T-cell (primary cell): ENCODE measurements at regions of chr9 and their contacts with region 1.

Region 1: DNA sequence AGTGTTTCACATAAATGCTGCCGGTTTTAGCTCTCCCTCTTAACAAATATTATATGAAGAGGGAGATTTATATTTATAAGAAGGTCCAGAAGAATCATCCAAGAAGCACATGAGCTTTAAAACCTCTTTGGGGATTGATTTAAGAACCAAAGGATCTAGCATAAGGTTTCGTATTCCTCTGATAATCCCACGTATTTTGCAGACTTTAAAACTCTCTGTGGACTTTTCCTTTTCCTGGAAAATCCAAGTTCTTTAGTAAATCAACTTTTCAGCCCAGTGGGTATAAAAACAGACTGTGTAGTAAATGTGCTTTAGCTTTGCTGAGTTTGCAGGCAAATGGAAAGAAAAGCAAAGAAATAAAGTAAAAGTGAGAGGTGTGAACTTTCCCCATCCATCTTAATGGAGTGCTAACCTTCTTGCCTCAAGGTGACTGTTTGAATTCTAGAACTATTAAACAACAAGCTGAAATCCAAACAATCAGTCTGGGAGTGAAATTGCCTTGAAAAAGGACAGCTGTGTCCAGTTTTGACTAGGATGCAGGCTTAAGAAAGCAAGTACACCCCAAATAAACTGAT is 363.4 kb upstream of the SLC24A2 start:
- DNase-seq: no peak
- ATAC-seq: no peak
- H3K4me3 ChIP-seq: no peak overlapping the region
- H3K4me3 Mint-ChIP-seq: no peak overlapping the region
- H3K27ac ChIP-seq: no peak overlapping the region
- H3K27ac Mint-ChIP-seq: no peak overlapping the region
- H3K4me1 ChIP-seq: no peaks in the 10 kb centered on the region
- H3K4me1 Mint-ChIP-seq: no peaks in the 10 kb centered on the region
- H3K27me3 ChIP-seq: no peaks in the 10 kb centered on the region
- H3K27me3 Mint-ChIP-seq: no peaks in the 10 kb centered on the region

Region 2: GRCh38 chr9:20139763-20140290 is 12.4 kb before region 1 on chr9:
- CTCF ChIA-PET with region 1: no interaction called
- POLR2A ChIA-PET with region 1: no interaction called
- DNase-seq: no peak
- ATAC-seq: no peak
- H3K4me3 ChIP-seq: no peak overlapping the region
- H3K4me3 Mint-ChIP-seq: no peak overlapping the region
- H3K27ac ChIP-seq: no peak overlapping the region
- H3K27ac Mint-ChIP-seq: no peak overlapping the region
- H3K4me1 ChIP-seq: no peaks in the 10 kb centered on the region
- H3K4me1 Mint-ChIP-seq: peaks cover 7 to 13% (median 10%) of the 10 kb centered on the region in 3 donors
- H3K27me3 ChIP-seq: no peaks in the 10 kb centered on the region
- H3K27me3 Mint-ChIP-seq: peaks cover 0 to 3% of the 10 kb centered on the region in 2 donors

Region 3: DNA sequence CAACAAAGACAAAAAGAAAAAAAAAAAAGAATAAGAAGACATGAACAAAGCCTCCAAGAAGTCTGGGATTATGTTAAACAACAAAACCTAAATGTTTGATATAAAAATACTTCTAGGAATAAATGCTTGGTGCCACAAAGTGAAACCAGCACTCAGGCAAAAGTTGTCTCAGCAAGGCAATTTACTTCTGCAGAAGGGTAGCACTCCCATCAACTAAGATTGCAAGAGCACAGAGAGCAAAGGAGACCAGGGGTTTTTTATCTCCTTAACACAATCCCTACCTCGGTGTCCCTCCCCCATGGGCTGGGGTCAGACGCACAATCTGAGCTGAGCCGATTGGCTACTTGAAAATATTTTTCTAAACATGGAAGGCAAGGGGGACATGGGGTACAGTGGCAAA is 17.9 kb after region 1 on chr9:
- CTCF ChIA-PET with region 1: no interaction called
- POLR2A ChIA-PET with region 1: no interaction called
- DNase-seq: no peak
- ATAC-seq: no peak
- H3K4me3 ChIP-seq: no peak overlapping the region
- H3K4me3 Mint-ChIP-seq: no peak overlapping the region
- H3K27ac ChIP-seq: no peak overlapping the region
- H3K27ac Mint-ChIP-seq: no peak overlapping the region
- H3K4me1 ChIP-seq: no peaks in the 10 kb centered on the region
- H3K4me1 Mint-ChIP-seq: no peaks in the 10 kb centered on the region
- H3K27me3 ChIP-seq: no peaks in the 10 kb centered on the region
- H3K27me3 Mint-ChIP-seq: peaks cover 0 to 5% of the 10 kb centered on the region in 2 donors

Region 4: GRCh38 chr9:20227166-20227874 is 75.1 kb after region 1 on chr9:
- CTCF ChIA-PET with region 1: no interaction called
- POLR2A ChIA-PET with region 1: interaction called in 1 of 2 experiments, 10 read pairs
- DNase-seq: no peak
- ATAC-seq: no peak
- H3K4me3 ChIP-seq: no peak overlapping the region
- H3K4me3 Mint-ChIP-seq: peak overlapping the region in 1 of 3 donors; percentile 39
- H3K27ac ChIP-seq: no peak overlapping the region
- H3K27ac Mint-ChIP-seq: no peak overlapping the region
- H3K4me1 ChIP-seq: peaks cover 4 to 5% of the 10 kb centered on the region in 2 experiments
- H3K4me1 Mint-ChIP-seq: peaks cover 22 to 55% (median 36%) of the 10 kb centered on the region in 3 donors
- H3K27me3 ChIP-seq: no peaks in the 10 kb centered on the region
- H3K27me3 Mint-ChIP-seq: no peaks in the 10 kb centered on the region